RWPE1 (cell line): ENCODE measurements at regions of chr13 and their contacts with region 1.

Region 1: DNA sequence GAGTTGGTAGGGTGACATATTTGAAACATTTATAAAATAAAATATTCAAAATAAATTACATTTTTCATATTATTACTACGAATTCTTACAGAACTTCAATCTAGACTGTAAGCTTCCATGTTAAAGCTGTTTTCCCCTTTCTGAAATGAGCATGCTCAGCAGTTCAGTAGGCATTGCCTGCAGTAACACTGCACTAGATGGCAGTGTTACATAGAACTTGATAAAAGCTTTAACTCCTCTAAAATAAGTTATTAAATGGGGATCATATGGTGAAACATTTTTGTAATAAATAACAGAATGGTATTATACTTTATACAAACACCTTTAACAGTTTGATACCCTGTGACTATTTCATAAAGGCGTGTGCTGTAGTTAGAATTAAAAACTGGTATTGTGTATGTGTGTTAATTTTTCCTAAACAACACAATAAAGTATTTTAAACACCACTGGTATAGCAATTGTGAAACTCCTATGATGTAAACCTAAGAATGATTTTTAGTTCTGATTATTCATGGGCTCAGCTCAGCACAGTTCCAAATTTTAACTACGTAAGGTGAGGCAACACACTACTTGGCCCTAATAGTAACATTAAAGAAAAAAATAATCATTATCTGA is 11.6 kb upstream of the GPR18 start:
- DNase-seq: peak; percentile 20
- H3K27ac ChIP-seq: no peak overlapping the region
- CTCF ChIP-seq: peak; percentile 61

Region 2: GRCh38 chr13:98947925-98948324 is 321.8 kb before region 1 on chr13:
- CTCF ChIA-PET with region 1: no interaction called
- POLR2A ChIA-PET with region 1: no interaction called
- DNase-seq: no peak
- H3K27ac ChIP-seq: no peak overlapping the region
- CTCF ChIP-seq: no peak

Region 3: DNA sequence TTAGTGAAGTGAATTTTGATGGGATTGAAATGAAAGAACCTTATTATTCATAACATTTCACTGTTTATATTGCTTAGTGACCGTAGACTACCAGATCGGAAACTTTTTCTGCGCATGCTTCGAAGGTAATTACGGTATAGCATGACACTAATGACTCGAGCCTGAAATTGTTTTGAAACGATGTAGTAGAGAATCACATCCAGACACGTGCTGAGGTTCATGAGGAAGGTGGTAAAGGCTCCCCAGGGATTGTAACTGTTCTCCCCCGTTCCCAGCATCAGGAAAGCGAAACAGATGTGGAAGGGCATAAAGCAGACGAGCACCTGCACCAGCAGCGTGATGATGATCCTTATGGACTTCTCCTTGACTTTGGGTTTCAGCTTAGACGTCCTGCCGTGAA is 14.9 kb before region 1 on chr13:
- CTCF ChIA-PET with region 1: no interaction called
- POLR2A ChIA-PET with region 1: no interaction called
- DNase-seq: no peak
- H3K27ac ChIP-seq: no peak overlapping the region
- CTCF ChIP-seq: no peak

Region 4: DNA sequence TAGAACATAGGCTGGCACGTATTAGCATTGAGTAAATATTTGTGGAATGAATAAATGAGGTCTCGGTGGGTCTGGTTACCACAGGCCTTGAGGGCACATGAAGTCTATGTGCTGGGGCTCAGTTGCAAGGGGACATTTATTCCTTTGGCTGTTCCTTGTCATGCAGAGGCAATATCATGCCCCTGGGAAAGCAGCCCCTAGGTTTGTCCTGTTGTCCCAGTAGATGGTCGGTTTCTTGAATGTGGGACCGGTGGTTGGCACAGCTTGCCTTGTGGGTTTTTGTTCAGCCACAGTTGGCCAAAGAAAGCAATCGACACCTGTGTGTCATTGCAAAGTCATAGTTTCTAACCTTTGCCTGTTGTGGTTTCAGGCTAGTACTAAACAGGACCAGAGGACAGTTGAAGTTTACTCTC is 62.2 kb after region 1 on chr13:
- CTCF ChIA-PET with region 1: no interaction called
- POLR2A ChIA-PET with region 1: no interaction called
- DNase-seq: no peak
- H3K27ac ChIP-seq: no peak overlapping the region
- CTCF ChIP-seq: no peak

Region 5: GRCh38 chr13:99366075-99366987 is 96.6 kb after region 1 on chr13:
- CTCF ChIA-PET with region 1: no interaction called
- POLR2A ChIA-PET with region 1: no interaction called
- DNase-seq: no peak
- H3K27ac ChIP-seq: no peak overlapping the region
- CTCF ChIP-seq: no peak

Region 6: GRCh38 chr13:99436686-99437416 is 167.1 kb after region 1 on chr13:
- CTCF ChIA-PET with region 1: interaction called, 12 read pairs
- POLR2A ChIA-PET with region 1: no interaction called
- DNase-seq: peak; percentile 66
- H3K27ac ChIP-seq: no peak overlapping the region
- CTCF ChIP-seq: peak; percentile 99